ENCODE measurements at regions of chr5 and their contacts with region 1.

Region 1: GRCh38 chr5:81751009-81751835 is at the start of gene SSBP2:
- DNase-seq: peak; percentile 98
- H3K4me3 ChIP-seq: peak within 1 kb of the TSS; percentile 82 to 88
- H3K27ac ChIP-seq: peak within 1 kb of the TSS; percentile 97 to 100
- H3K4me1 ChIP-seq: peaks cover 6% of the 10 kb centered on the region
- H3K27me3 ChIP-seq: no peaks in the 10 kb centered on the region
- CTCF ChIP-seq: peak in 1 of 4 experiments; percentile 12
- POLR2A ChIP-seq: peak; percentile 87
- total RNA-seq, gene SSBP2: 25.1 to 26.9 TPM

Region 2: DNA sequence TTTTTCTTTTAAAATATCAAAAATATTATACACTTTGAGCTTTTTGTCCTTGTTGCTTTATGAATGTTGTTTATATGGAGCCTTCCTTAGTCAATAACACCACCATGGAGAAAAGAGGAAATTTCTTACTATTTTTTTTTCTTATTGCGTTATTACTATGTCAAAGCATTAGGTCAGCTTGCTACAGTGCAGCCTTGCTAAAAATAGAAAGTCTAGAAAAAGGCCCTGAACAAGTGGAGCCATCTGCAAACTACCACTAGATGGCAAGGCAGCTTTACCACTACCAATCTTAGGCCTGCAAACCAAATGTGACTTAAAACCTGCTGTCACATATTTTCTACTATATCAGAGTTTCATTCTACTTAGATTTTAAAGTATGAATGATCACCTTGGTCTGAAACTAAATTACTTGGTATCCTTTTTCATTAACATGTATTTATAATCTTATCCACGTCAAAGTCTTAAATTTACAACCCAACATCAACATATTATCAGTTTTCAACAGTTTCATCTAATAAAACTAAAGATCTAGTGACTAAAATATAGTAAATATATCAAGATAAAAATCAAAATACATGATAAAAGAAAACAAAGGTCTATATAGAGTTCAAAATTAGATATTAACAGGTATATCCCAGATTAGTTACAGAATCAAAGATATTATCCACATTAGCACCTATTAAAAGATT is 244.2 kb before region 1 on chr5:
- intact Hi-C with region 1: loop called (anchors 2 kb)
- DNase-seq: peak; percentile 57
- H3K4me3 ChIP-seq: no peak overlapping the region
- H3K27ac ChIP-seq: no peak overlapping the region
- H3K4me1 ChIP-seq: no peaks in the 10 kb centered on the region
- H3K27me3 ChIP-seq: no peaks in the 10 kb centered on the region
- CTCF ChIP-seq: peak; percentile 55 to 85 (median 76)
- POLR2A ChIP-seq: no peak

Region 3: GRCh38 chr5:81851481-81852178 is 100.4 kb after region 1 on chr5:
- intact Hi-C with region 1: loop called (anchors 1 kb)
- DNase-seq: peak; percentile 94
- H3K4me3 ChIP-seq: peak overlapping the region; percentile 32 to 36
- H3K27ac ChIP-seq: peak overlapping the region; percentile 75 to 82
- H3K4me1 ChIP-seq: no peaks in the 10 kb centered on the region
- H3K27me3 ChIP-seq: no peaks in the 10 kb centered on the region
- CTCF ChIP-seq: peak in 2 of 4 experiments; percentile 29 to 31
- POLR2A ChIP-seq: peak; percentile 29

Region 4: DNA sequence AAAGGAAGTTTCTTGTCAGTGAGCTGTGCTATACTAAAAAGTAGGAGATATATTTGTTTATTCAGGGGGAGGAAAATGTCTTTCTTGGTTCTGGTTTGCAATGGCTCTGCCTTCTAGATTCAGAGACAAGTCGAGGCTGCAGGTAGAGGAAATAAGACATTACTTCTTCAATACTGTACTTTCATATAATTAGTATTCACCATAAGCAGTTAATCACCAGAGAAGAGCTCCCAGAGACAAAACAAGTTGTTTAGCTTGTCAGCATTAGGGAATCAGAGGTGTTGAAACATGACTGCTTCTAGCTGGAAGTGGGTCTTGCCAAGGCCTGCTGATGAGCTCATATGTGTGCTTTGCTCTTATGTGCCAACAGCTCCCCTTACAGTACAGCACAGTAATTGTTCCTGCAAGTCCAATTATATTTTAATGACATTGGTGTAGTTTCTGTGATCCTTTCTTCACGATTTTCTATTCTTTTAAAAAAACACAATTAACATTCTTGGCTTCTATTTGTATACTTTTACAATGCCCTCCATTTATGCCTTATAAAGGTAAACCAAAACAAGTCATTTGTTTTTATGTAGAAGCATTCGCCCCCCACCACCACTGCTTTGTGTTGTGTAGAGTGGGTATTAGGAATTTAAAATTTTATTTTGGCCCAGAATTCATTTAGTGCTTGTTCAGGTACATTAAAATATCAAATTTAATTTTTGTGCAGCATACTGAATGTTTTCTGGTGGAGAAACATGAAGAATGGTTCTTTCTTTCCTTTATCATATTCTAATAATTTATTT is 414.7 kb after region 1 on chr5:
- intact Hi-C with region 1: loop called (anchors 2 kb)
- DNase-seq: peak; percentile 78
- H3K4me3 ChIP-seq: no peak overlapping the region
- H3K27ac ChIP-seq: peak overlapping the region; percentile 37 to 39
- H3K4me1 ChIP-seq: peaks cover 5% of the 10 kb centered on the region
- H3K27me3 ChIP-seq: no peaks in the 10 kb centered on the region
- CTCF ChIP-seq: peak in 3 of 4 experiments; percentile 71 to 84 (median 81)
- POLR2A ChIP-seq: no peak

Measured in prostate gland (tissue), 2 donors.